ENCODE measurements at regions of chrX and their contacts with region 1.

Region 1: GRCh38 chrX:69387567-69388487 is 116.3 kb upstream of the NALF2 start:
- DNase-seq: no peak
- H3K4me3 ChIP-seq: no peak overlapping the region
- H3K27ac ChIP-seq: no peak overlapping the region
- H3K4me1 ChIP-seq: no peaks in the 10 kb centered on the region
- H3K27me3 ChIP-seq: no peaks in the 10 kb centered on the region
- CTCF ChIP-seq: peak; percentile 52 to 83 (median 71)

Region 2: GRCh38 chrX:69060631-69061408 is 327.0 kb before region 1 on chrX:
- intact Hi-C with region 1: loop called (anchors 10 kb)
- DNase-seq: peak in 1 of 2 donors; percentile 63
- H3K4me3 ChIP-seq: no peak overlapping the region
- H3K27ac ChIP-seq: no peak overlapping the region
- H3K4me1 ChIP-seq: no peaks in the 10 kb centered on the region
- H3K27me3 ChIP-seq: no peaks in the 10 kb centered on the region
- CTCF ChIP-seq: peak in 2 of 3 experiments; percentile 30 to 52

Region 3: GRCh38 chrX:69093960-69094871 is 293.6 kb before region 1 on chrX:
- intact Hi-C with region 1: loop called (anchors 10 kb)
- DNase-seq: peak in 1 of 2 donors; percentile 68
- H3K4me3 ChIP-seq: no peak overlapping the region
- H3K27ac ChIP-seq: no peak overlapping the region
- H3K4me1 ChIP-seq: no peaks in the 10 kb centered on the region
- H3K27me3 ChIP-seq: no peaks in the 10 kb centered on the region
- CTCF ChIP-seq: peak; percentile 14 to 52 (median 36)

Region 4: DNA sequence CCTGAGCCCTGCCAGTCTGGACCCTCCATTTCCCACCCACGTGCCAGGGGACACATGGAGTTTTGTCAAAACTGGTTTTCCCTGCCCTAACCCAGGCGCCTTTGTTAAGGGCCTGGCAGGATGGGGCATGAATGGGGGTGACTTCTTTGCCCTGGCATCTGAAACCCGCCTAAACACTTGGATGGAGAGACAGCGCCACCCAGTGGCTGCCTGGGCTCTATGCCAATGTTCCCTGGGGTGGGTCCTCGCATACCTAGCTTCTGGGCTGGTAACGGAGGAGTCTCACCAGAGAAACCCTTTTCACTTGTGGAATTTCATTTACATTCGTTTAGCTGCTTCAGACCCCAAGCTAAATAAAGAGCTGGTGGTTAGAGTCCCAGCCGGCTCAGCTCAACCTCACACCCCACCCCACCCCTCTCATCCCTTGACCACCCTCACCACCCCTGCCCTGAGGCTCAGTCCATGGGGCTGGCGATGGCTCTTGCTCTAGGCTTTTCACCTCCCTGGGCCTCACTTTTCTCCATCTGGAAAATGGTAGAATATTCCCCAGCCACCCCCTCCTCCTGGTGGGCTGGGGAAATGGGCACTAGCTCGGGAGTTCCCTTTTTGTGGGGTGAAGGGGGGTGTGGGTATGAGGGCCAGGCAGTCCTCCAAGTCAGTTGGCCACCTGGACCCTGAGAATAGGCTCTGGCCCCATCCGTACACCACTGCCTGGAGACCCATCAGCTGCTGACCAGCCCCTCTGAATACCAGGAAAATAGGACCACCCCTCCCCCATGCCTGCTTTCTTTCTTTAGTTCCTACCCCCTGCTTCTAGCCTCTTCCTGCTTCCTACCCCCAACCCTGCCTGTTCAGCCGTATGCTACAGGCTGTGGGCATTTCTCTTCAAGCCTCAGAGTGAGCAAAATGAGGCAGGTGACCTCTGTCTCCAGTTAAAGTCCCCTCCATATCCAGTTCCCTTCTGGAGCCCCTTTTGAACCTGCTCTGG is 165.4 kb before region 1 on chrX:
- intact Hi-C with region 1: loop called (anchors 5 kb)
- DNase-seq: peak in 1 of 2 donors; percentile 68
- H3K4me3 ChIP-seq: no peak overlapping the region
- H3K27ac ChIP-seq: no peak overlapping the region
- H3K4me1 ChIP-seq: no peaks in the 10 kb centered on the region
- H3K27me3 ChIP-seq: no peaks in the 10 kb centered on the region
- CTCF ChIP-seq: peak; percentile 66 to 73 (median 67)

Region 5: GRCh38 chrX:69285881-69286564 is 101.8 kb before region 1 on chrX:
- intact Hi-C with region 1: loop called (anchors 5 kb)
- DNase-seq: peak in 1 of 2 donors; percentile 71
- H3K4me3 ChIP-seq: peak overlapping the region; percentile 53 to 61
- H3K27ac ChIP-seq: peak overlapping the region in 1 of 2 donors; percentile 38
- H3K4me1 ChIP-seq: peaks cover 0 to 3% of the 10 kb centered on the region in 2 donors
- H3K27me3 ChIP-seq: no peaks in the 10 kb centered on the region
- CTCF ChIP-seq: peak; percentile 68 to 94 (median 88)

Measured in ascending aorta (tissue), 2 donors.